ENCODE measurements at regions of chr9 and their contacts with region 1.

Region 1: DNA sequence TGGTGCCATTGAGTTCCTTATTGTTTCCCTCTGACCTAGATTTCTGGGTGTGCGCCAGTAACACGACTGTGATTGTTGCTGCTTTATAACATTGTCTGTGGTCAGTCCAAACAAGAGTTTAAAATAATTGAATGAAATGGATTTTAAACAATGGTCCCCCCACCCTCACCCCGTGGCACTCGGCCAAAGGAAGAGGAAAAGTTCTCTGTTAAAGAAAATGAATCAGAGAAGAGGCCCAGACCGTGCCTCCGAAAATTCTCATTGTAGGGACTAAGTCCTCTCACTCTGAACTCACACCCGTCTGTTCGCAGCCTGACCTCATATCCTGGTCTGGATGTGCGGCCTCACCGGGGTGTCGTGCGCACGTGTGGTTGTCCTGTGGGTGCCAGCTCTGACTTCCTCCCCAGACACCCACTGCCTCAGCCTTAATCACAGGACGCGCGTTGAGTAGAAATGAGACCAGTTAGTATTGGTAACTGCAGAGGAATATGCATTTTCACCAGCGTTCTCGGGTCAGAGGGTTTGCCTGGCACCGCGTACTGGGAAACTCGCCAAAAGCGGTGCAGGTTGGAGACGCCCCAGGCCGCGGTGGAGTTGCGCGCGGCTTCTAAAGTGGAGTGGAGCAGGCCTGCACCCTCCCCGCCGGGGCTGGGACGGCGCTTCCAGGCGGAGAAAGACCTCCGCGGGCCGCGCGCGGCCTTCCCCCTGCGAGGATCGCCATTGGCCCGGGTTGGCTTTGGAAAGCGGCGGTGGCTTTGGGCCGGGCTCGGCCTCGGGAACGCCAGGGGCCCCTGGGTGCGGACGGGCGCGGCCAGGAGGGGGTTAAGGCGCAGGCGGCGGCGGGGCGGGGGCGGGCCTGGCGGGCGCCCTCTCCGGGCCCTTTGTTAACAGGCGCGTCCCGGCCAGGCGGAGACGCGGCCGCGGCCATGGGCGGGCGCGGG is at the start of gene ABL1:
- DNase-seq: peak; percentile 65
- ATAC-seq: peak; percentile 72
- H3K4me3 Mint-ChIP-seq: peak within 1 kb of the TSS; percentile 88
- H3K27ac Mint-ChIP-seq: peak within 1 kb of the TSS; percentile 94
- H3K4me1 Mint-ChIP-seq: peaks cover 62% of the 10 kb centered on the region
- H3K27me3 Mint-ChIP-seq: no peaks in the 10 kb centered on the region
- CTCF ChIP-seq: no peak
- total RNA-seq, gene ABL1: 87.5 to 104 TPM (median 89.1 TPM) in 3 replicates

Region 2: GRCh38 chr9:130847327-130848217 is 12.9 kb after region 1 on chr9:
- CTCF ChIA-PET with region 1: no interaction called
- POLR2A ChIA-PET with region 1: interaction called, 12 read pairs
- DNase-seq: peak; percentile 46
- ATAC-seq: peak; percentile 82
- H3K4me3 Mint-ChIP-seq: no peak overlapping the region; the same call in 1 of the 2 replicates
- H3K27ac Mint-ChIP-seq: peak overlapping the region; percentile 94
- H3K4me1 Mint-ChIP-seq: peaks cover 63% of the 10 kb centered on the region
- H3K27me3 Mint-ChIP-seq: no peaks in the 10 kb centered on the region
- CTCF ChIP-seq: no peak